SK-N-SH (cell line): ENCODE measurements at regions of chr6 and their contacts with region 1.

Region 1: DNA sequence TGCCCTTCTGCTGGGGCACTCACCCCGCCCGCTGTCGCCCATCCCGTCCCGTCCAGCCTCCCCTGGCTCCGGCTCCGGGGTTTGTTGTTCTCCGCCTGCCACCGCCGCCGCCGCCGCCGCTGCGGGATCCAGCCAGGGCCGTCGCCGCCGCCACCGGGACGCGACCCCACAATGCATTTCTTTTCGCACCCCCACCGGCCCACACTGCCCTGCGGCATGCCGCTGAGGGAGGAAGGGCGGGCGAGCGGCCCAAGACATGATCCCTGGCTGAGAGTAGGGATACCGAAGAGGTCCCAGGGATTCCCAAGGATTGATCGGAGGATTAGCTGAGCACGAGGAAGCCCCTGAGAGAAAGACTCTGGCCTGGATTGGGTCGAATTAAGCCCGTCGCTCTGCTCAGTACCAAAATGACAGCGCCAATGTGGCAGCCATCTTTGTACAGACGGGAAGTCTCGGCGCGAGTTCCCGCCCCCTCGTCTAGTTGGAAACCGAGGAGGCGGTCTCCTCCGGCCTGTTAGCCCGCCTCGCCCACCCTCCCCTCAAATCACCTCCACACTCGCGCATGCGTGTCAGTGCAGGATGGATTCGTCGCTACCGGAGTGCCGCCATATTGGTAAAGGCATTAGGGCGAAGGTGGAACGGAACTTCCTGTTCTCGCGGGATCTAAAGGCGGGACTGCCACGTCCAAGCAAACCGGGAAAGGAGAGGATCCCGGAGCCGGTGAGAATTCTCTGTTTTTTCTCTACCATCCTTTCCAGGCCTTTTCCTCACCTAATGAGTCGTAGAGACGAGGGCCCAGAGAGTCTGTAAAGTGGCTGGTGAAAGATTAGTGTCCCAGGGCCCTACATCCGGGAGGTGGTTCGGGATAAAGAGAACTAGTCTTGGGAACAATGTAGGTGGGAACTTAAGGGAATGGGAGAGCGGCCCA is at the starts of genes RXRB and SLC39A7:
- DNase-seq: peak; percentile 96
- H3K4me3 ChIP-seq: peak within 1 kb of the TSS; percentile 82 to 97
- H3K27ac ChIP-seq: peak within 1 kb of the TSS; percentile 97 to 99
- H3K4me1 ChIP-seq: peaks cover 17 to 41% of the 10 kb centered on the region in 2 experiments; a peak in 3 of 4 replicates
- H3K27me3 ChIP-seq: no peaks in the 10 kb centered on the region
- CTCF ChIP-seq: no peak
- EP300 ChIP-seq: no peak
- RAD21 ChIP-seq: no peak
- polyA plus RNA-seq, gene RXRB: 45.8 and 61.0 TPM in 2 replicates
- polyA plus RNA-seq, gene SLC39A7: 129 and 138 TPM in 2 replicates

Region 2: GRCh38 chr6:33156561-33156960 is 43.9 kb before region 1 on chr6:
- CTCF ChIA-PET with region 1: interaction called, 50 read pairs
- POLR2A ChIA-PET with region 1: no interaction called
- DNase-seq: no peak
- H3K4me3 ChIP-seq: no peak overlapping the region
- H3K27ac ChIP-seq: no peak overlapping the region
- H3K4me1 ChIP-seq: peaks cover 0 to under 1% of the 10 kb centered on the region in 2 experiments; a peak in 1 of 4 replicates
- H3K27me3 ChIP-seq: no peaks in the 10 kb centered on the region; the same call in 1 of the 2 replicates
- CTCF ChIP-seq: no peak
- EP300 ChIP-seq: no peak
- RAD21 ChIP-seq: no peak

Region 3: GRCh38 chr6:33161354-33162331 is 38.8 kb before region 1 on chr6:
- CTCF ChIA-PET with region 1: interaction called, 50 read pairs
- POLR2A ChIA-PET with region 1: no interaction called
- DNase-seq: peak; percentile 93
- H3K4me3 ChIP-seq: peak overlapping the region; percentile 44 to 57
- H3K27ac ChIP-seq: no peak overlapping the region
- H3K4me1 ChIP-seq: peaks cover 0 to 7% of the 10 kb centered on the region in 2 experiments; a peak in 1 of 4 replicates
- H3K27me3 ChIP-seq: no peaks in the 10 kb centered on the region; the same call in 1 of the 2 replicates
- CTCF ChIP-seq: peak; percentile 85
- EP300 ChIP-seq: no peak
- RAD21 ChIP-seq: peak; percentile 68

Region 4: DNA sequence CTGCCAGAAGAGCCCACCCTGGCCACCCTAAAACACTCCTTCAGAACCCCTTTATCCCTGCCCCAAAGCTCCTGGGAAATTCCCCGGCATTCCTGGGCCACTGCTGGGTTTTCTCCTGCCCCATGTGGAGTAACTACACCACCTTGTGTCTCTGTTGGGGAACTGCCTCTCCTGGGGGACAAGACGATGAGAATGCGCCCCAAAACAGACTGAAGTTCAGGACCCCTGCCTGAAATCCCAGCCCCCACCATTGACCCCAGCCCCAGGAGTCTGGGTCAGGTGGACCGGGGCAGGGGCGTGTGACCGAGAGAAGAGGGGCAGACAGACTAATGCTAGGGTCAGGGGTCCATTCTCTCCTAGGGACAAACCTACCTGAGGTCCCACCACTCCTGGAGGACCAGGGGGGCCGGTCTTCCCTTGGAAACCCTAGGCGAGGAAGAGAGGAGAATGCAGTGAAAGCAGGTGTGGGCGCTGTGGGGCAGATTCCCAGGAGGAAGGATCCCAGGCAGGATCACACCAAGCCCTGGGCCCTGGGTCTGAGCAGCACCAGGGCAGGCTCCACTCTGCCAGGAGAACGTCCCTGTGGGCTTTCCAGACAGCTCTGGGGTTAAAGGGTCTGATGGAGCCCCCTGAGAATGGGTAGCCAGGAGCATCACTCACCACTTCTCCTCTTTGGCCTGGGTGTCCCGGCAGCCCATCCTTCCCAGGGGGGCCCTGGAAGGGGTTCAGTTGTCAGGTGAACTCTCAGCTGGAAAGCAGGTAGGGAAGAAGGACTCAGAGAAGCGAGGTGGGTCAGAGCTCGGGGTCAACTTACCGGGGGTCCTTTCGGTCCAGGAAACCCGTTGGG is 27.6 kb before region 1 on chr6:
- CTCF ChIA-PET with region 1: interaction called, 17 read pairs
- POLR2A ChIA-PET with region 1: no interaction called
- DNase-seq: no peak
- H3K4me3 ChIP-seq: no peak overlapping the region
- H3K27ac ChIP-seq: no peak overlapping the region
- H3K4me1 ChIP-seq: peaks cover 0 to 3% of the 10 kb centered on the region in 2 experiments; a peak in 1 of 4 replicates
- H3K27me3 ChIP-seq: no peaks in the 10 kb centered on the region
- CTCF ChIP-seq: peak; percentile 54
- EP300 ChIP-seq: no peak
- RAD21 ChIP-seq: peak; percentile 60

Region 5: DNA sequence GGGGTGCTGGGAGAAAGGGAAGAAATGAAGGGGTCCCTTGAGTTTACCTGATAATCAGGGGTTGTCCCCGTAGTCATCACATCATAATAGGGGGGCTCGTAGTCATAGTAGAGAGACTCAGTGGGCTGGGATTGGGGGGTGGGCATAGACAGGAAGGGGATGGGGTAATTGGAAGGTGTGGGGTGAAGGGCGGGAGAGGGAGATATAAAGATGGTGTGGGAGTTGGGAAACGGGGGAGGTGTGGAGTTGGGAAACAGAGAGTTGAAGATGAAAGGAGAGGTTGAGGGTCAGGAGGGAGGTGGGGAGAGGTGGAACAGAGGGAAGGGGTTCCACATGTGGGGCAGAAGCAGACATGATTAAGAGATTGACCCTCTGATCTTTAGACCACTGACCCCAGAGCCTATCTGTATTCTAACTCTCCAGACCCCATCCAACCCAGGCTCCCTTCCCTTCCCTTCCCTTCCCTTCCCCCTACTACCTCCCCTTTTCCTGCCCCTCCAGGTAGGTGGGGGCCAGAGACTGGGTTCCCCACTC is 14.8 kb before region 1 on chr6:
- CTCF ChIA-PET with region 1: interaction called, 10 read pairs
- POLR2A ChIA-PET with region 1: no interaction called
- DNase-seq: no peak
- H3K4me3 ChIP-seq: no peak overlapping the region
- H3K27ac ChIP-seq: no peak overlapping the region
- H3K4me1 ChIP-seq: no peaks in the 10 kb centered on the region; a peak in 1 of 4 replicates
- H3K27me3 ChIP-seq: no peaks in the 10 kb centered on the region
- CTCF ChIP-seq: no peak
- EP300 ChIP-seq: no peak
- RAD21 ChIP-seq: no peak

Region 6: GRCh38 chr6:33317669-33318425 is 117.4 kb after region 1 on chr6 and contains the start of gene ZBTB22:
- CTCF ChIA-PET with region 1: no interaction called
- POLR2A ChIA-PET with region 1: no interaction called
- DNase-seq: peak; percentile 92
- H3K4me3 ChIP-seq: peak within 1 kb of the TSS; percentile 56
- H3K27ac ChIP-seq: peak within 1 kb of the TSS; percentile 88 to 95
- H3K4me1 ChIP-seq: peaks cover 29 to 53% of the 10 kb centered on the region in 2 experiments; a peak in 3 of 4 replicates
- H3K27me3 ChIP-seq: no peaks in the 10 kb centered on the region
- CTCF ChIP-seq: no peak
- EP300 ChIP-seq: no peak
- RAD21 ChIP-seq: no peak
- polyA plus RNA-seq, gene ZBTB22: 19.5 and 22.2 TPM in 2 replicates

Region 7: DNA sequence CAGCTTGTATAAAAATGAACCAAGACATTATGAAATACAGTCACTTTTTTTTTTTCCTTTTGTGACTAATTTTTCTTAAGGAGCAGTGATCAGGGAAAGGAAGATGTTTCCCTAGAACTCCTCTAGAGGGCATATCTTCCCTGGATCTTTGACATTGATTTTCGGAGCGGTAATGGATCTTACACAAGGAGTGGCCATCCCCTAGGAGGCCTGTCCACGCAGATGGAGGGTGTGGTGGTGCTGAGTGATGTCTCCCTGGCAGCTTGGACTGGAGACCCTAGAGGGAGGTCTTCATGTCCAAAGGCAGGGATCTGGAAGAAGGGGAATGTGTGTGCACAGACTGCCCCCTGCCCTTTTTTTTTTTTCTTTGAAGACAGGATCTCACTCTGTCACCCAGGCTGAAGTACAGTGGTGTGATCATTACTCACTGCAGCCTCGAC is 184.1 kb after region 1 on chr6:
- CTCF ChIA-PET with region 1: no interaction called
- POLR2A ChIA-PET with region 1: no interaction called
- DNase-seq: no peak
- H3K4me3 ChIP-seq: no peak overlapping the region
- H3K27ac ChIP-seq: no peak overlapping the region
- H3K4me1 ChIP-seq: no peaks in the 10 kb centered on the region
- H3K27me3 ChIP-seq: no peaks in the 10 kb centered on the region
- CTCF ChIP-seq: peak; percentile 54
- EP300 ChIP-seq: no peak
- RAD21 ChIP-seq: 0 out of 2 replicates have a peak, but pooled peaks have one; percentile 18